ENCODE measurements at regions of chr19 and their contacts with region 1.

Region 1: GRCh38 chr19:2186071-2186846 is 22.5 kb downstream of the DOT1L start:
- DNase-seq: peak; percentile 91
- H3K4me3 ChIP-seq: peak overlapping the region; percentile 35
- H3K27ac ChIP-seq: peak overlapping the region; percentile 81
- H3K27me3 ChIP-seq: no peaks in the 10 kb centered on the region
- CTCF ChIP-seq: no peak

Region 2: GRCh38 chr19:2168619-2169424 is 17.4 kb before region 1 on chr19:
- CTCF ChIA-PET with region 1: interaction called, 4 read pairs
- POLR2A ChIA-PET with region 1: interaction called, 23 read pairs
- DNase-seq: peak; percentile 93
- H3K4me3 ChIP-seq: peak overlapping the region; percentile 21
- H3K27ac ChIP-seq: peak overlapping the region; percentile 90
- H3K27me3 ChIP-seq: no peaks in the 10 kb centered on the region
- CTCF ChIP-seq: no peak

Region 3: DNA sequence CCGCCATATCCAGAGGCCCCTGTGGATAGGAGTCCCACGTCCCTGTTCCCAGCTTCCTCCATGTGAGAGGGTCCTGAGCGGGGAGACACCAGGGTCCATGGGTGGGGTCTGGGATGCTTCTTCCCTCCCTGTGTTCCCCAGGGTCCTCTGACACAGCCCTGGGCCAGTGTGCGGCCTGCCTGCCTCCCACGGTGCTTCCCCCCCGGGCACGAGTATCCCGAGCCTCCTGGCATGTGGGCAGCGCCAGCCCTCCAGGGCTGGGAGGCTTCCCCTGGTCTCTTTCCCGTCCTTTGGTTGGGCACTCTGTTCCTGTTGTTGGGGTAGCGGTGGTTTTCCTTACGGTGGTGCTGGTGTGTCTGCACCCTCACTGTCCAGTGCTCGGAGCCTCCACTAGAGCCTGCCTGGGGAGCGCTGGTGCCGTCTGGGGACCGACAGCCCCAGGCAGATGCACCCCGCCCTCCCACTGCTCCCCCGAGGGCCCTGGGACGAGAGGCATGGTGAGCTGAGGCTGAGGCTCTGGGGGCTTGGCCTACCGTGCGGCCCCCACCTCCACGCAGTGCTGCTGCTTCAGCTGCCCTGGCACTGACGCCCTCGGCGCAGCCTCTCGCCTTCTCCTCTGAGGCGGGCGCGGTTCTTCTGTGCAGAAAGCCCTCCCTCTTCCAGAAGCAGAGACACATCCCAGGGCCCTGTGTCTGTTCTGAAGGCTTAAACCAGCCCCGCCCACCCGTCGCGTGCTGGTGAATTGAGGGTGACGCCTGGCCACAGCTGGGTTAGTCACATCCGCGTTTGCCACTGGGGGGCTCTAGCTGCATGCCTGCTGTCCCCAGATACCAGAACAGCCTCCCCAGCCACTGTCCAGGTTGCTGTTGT is 22.0 kb after region 1 on chr19:
- CTCF ChIA-PET with region 1: no interaction called
- POLR2A ChIA-PET with region 1: no interaction called
- DNase-seq: no peak
- H3K4me3 ChIP-seq: no peak overlapping the region
- H3K27ac ChIP-seq: no peak overlapping the region
- H3K27me3 ChIP-seq: no peaks in the 10 kb centered on the region
- CTCF ChIP-seq: peak; percentile 19; the same call in 1 of the 2 replicates

Region 4: DNA sequence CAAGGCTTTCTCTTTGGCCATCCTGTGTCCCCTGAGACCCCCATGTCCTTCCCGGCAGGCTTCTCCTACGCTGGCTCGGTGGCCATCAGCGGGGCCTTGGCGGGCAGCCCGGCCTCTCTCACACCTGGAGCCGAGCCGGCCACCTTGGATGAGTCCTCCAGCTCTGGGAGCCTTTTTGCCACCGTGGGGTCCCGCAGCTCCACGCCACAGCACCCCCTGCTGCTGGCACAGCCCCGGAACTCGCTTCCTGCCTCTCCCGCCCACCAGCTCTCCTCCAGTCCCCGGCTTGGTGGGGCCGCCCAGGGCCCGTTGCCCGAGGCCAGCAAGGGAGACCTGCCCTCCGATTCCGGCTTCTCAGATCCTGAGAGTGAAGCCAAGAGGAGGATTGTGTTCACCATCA is 35.7 kb after region 1 on chr19:
- CTCF ChIA-PET with region 1: no interaction called
- POLR2A ChIA-PET with region 1: no interaction called
- DNase-seq: no peak
- H3K4me3 ChIP-seq: no peak overlapping the region
- H3K27ac ChIP-seq: no peak overlapping the region
- H3K27me3 ChIP-seq: no peaks in the 10 kb centered on the region
- CTCF ChIP-seq: peak; percentile 28

Region 5: GRCh38 chr19:2820112-2820702 is 633.9 kb after region 1 on chr19:
- CTCF ChIA-PET with region 1: no interaction called
- POLR2A ChIA-PET with region 1: no interaction called
- DNase-seq: no peak
- H3K4me3 ChIP-seq: peak overlapping the region; percentile 78
- H3K27ac ChIP-seq: no peak overlapping the region
- H3K27me3 ChIP-seq: no peaks in the 10 kb centered on the region
- CTCF ChIP-seq: no peak

Measured in AG04450 (cell line).